Right cardiac atrium (tissue), 5 donors: ENCODE measurements at regions of chrX and their contacts with region 1.

Region 1: GRCh38 chrX:81377329-81377728 is 175.4 kb downstream of the SH3BGRL start:
- DNase-seq: no peak
- ATAC-seq: no peak
- H3K4me3 ChIP-seq: no peak overlapping the region
- H3K27ac ChIP-seq: no peak overlapping the region
- H3K4me1 ChIP-seq: no peaks in the 10 kb centered on the region
- H3K27me3 ChIP-seq: no peaks in the 10 kb centered on the region

Region 2: DNA sequence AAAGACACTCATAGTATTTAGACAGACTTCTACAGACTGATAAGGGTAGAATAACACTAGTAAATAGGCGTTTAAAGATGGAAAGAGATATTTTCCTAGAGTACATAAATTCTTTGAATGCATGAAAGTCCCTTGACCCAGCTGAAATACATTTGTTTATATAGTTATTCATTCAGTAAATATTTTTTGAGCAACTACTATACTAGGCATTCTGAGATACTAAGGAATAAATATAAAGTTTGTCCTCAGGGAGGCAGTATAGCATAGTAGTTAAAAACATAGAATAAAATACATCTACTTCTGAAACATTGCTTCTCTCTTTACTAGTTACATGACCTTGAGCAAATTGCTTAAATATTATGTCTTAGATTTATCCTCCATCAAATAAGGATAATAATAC is 203.0 kb before region 1 on chrX:
- intact Hi-C with region 1: loop called in 1 of 4 experiments (anchors 10 kb)
- DNase-seq: no peak
- ATAC-seq: no peak
- H3K4me3 ChIP-seq: no peak overlapping the region
- H3K27ac ChIP-seq: no peak overlapping the region
- H3K4me1 ChIP-seq: no peaks in the 10 kb centered on the region
- H3K27me3 ChIP-seq: no peaks in the 10 kb centered on the region

Region 3: DNA sequence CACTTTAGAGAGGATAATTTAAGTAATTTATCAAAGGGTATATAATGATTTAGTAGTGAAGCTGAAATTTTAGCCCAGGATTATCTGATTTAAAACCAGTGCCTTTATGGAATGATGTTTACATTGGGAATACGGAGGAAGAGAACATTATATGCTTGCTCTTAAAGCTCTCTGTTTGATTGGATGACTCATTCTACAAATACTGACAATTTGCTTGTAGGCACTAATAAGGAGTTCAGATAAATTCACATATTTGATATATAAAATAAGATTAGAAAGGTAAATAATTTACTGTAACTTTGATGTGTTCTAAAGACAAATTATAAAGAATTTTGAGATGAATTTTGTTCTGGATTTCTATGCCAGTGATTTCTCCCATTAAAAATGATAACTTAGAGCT is 90.7 kb before region 1 on chrX:
- intact Hi-C with region 1: no loop called
- DNase-seq: no peak
- ATAC-seq: no peak
- H3K4me3 ChIP-seq: no peak overlapping the region
- H3K27ac ChIP-seq: no peak overlapping the region
- H3K4me1 ChIP-seq: no peaks in the 10 kb centered on the region
- H3K27me3 ChIP-seq: no peaks in the 10 kb centered on the region